ENCODE measurements at regions of chr9 and their contacts with region 1.

Region 1: GRCh38 chr9:114505187-114506081 is at the start of gene WHRN:
- DNase-seq: peak; percentile 80 to 94 (median 89)
- ATAC-seq: peak; percentile 95
- H3K4me3 ChIP-seq: peak within 1 kb of the TSS; percentile 59
- H3K4me3 Mint-ChIP-seq: peak within 1 kb of the TSS; percentile 83 to 90 (median 88)
- H3K27ac ChIP-seq: peak within 1 kb of the TSS; percentile 57
- H3K27ac Mint-ChIP-seq: peak within 1 kb of the TSS; percentile 55 to 94 (median 87)
- H3K4me1 ChIP-seq: peaks cover 14 to 29% of the 10 kb centered on the region in 2 donors
- H3K4me1 Mint-ChIP-seq: peaks cover 5 to 26% (median 22%) of the 10 kb centered on the region in 7 donors
- H3K27me3 ChIP-seq: no peaks in the 10 kb centered on the region
- H3K27me3 Mint-ChIP-seq: peaks cover 0 to 86% (median 33%) of the 10 kb centered on the region in 5 donors
- total RNA-seq, gene WHRN: 1.1 to 24.0 (median 3.0) TPM

Region 2: DNA sequence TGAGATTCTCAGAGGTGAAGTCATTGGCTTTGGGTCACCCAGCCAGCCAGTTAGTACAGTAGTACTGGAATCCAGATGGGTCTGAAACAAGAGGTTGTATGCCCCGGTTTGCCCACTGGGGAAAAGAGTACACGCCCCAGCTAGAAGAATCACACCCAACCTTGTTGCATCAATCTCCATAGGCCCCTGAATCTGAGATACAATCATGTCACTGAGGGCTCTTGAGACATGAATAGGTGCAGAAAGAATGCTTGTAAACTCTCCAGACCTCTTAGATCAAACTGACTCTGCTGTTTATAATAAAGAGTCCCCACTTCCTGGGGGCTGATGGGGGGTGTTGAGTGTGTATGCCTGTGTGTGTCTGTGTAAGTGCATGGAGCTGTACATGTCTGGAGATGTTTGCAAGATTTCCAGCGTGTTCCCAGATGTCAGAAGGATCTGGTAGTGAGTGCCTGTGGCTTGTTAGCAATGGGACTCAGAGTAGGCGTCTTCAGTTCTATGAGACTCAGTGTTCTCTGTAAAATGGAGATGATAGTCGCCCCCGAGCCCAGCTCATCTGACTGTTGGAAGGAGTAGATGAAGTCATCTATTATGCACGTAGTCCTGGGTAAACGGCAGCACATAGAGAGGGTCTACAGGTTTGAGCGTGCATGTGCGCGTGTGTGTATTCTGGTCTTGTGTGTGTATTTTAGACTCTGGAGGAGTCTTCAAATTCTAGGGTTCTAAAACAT is 301.9 kb before region 1 on chr9:
- CTCF ChIA-PET with region 1: no interaction called
- POLR2A ChIA-PET with region 1: no interaction called
- intact Hi-C with region 1: no loop called
- DNase-seq: no peak
- ATAC-seq: no peak
- H3K4me3 ChIP-seq: no peak overlapping the region
- H3K4me3 Mint-ChIP-seq: no peak overlapping the region
- H3K27ac ChIP-seq: no peak overlapping the region
- H3K27ac Mint-ChIP-seq: no peak overlapping the region
- H3K4me1 ChIP-seq: no peaks in the 10 kb centered on the region
- H3K4me1 Mint-ChIP-seq: peaks cover 0 to 3% (median 0%) of the 10 kb centered on the region in 7 donors
- H3K27me3 ChIP-seq: no peaks in the 10 kb centered on the region
- H3K27me3 Mint-ChIP-seq: no peaks in the 10 kb centered on the region

Region 3: GRCh38 chr9:114291064-114291474 is 214.4 kb before region 1 on chr9:
- CTCF ChIA-PET with region 1: no interaction called
- POLR2A ChIA-PET with region 1: no interaction called
- intact Hi-C with region 1: no loop called
- DNase-seq: peak; percentile 30 to 73 (median 57)
- ATAC-seq: peak; percentile 65
- H3K4me3 ChIP-seq: no peak overlapping the region
- H3K4me3 Mint-ChIP-seq: no peak overlapping the region
- H3K27ac ChIP-seq: no peak overlapping the region
- H3K27ac Mint-ChIP-seq: peak overlapping the region in 1 of 9 donors; percentile 20
- H3K4me1 ChIP-seq: no peaks in the 10 kb centered on the region
- H3K4me1 Mint-ChIP-seq: peaks cover 0 to 5% (median 0%) of the 10 kb centered on the region in 7 donors
- H3K27me3 ChIP-seq: no peaks in the 10 kb centered on the region
- H3K27me3 Mint-ChIP-seq: peaks cover 2 to 7% (median 5%) of the 10 kb centered on the region in 5 donors

Region 4: DNA sequence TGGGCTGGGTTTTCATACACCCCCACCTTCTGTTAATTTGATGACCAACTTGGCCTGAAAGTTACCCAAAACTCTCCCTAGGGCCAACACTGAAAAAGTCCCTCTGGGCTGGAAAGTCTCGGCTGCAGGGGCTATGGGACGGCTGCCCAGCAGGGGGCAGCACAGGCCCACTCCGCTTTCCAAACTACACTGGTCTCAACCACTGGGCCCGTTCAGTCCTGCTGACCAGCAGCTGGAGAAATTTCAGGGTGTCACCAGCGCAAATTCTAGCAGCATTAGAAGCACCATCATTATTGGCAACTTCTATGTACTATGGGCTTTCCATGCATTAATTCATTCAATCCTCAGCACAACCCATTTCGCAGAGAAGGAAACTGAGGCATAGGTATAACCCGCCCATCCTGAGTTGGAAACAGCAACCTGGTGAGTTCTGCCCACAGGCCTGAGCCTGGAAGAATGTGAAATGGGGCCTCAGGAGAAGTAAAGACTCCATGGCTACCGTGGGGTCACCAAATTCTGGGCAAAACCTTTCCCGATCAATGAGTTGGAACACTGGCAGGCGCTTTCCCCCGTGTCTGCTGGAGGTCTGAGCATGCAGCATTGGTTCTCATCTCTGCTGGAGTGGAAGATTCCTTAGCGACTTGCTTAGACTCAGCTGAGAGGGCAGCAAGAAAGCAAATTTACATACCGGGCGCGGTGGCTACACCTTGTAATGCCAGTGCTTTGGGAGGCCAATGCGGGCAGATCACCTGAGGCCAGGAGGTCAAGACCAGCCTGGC is 166.1 kb before region 1 on chr9:
- CTCF ChIA-PET with region 1: interaction called, 3 read pairs
- POLR2A ChIA-PET with region 1: no interaction called
- intact Hi-C with region 1: loop called (anchors 1 to 5 kb)
- DNase-seq: peak in 8 of 9 donors; percentile 19 to 64 (median 50)
- ATAC-seq: peak; percentile 83
- H3K4me3 ChIP-seq: no peak overlapping the region
- H3K4me3 Mint-ChIP-seq: no peak overlapping the region
- H3K27ac ChIP-seq: peak overlapping the region; percentile 14
- H3K27ac Mint-ChIP-seq: peak overlapping the region in 6 of 9 donors; percentile 15 to 76 (median 67)
- H3K4me1 ChIP-seq: no peaks in the 10 kb centered on the region
- H3K4me1 Mint-ChIP-seq: peaks cover 8 to 37% (median 17%) of the 10 kb centered on the region in 7 donors
- H3K27me3 ChIP-seq: no peaks in the 10 kb centered on the region
- H3K27me3 Mint-ChIP-seq: no peaks in the 10 kb centered on the region

Region 5: GRCh38 chr9:114405294-114406034 is 100.0 kb before region 1 on chr9:
- CTCF ChIA-PET with region 1: interaction called, 15 read pairs
- POLR2A ChIA-PET with region 1: no interaction called
- intact Hi-C with region 1: loop called (anchors 1 kb)
- DNase-seq: peak; percentile 56 to 84 (median 80)
- ATAC-seq: peak; percentile 97
- H3K4me3 ChIP-seq: no peak overlapping the region
- H3K4me3 Mint-ChIP-seq: no peak overlapping the region
- H3K27ac ChIP-seq: no peak overlapping the region
- H3K27ac Mint-ChIP-seq: peak overlapping the region in 6 of 9 donors; percentile 16 to 91 (median 60)
- H3K4me1 ChIP-seq: peaks cover 4 to 11% of the 10 kb centered on the region in 2 donors
- H3K4me1 Mint-ChIP-seq: peaks cover 6 to 10% (median 6%) of the 10 kb centered on the region in 7 donors
- H3K27me3 ChIP-seq: no peaks in the 10 kb centered on the region
- H3K27me3 Mint-ChIP-seq: no peaks in the 10 kb centered on the region

Region 6: GRCh38 chr9:114452219-114453165 is 52.9 kb before region 1 on chr9:
- CTCF ChIA-PET with region 1: no interaction called
- POLR2A ChIA-PET with region 1: interaction called, 3 read pairs
- intact Hi-C with region 1: loop called in 1 of 2 experiments (anchors 5 kb)
- DNase-seq: peak in 7 of 9 donors; percentile 33 to 55 (median 45)
- ATAC-seq: no peak
- H3K4me3 ChIP-seq: peak overlapping the region; percentile 23
- H3K4me3 Mint-ChIP-seq: peak overlapping the region; percentile 18 to 66 (median 48)
- H3K27ac ChIP-seq: peak overlapping the region; percentile 42
- H3K27ac Mint-ChIP-seq: peak overlapping the region; percentile 63 to 95 (median 84)
- H3K4me1 ChIP-seq: peaks cover 7 to 22% of the 10 kb centered on the region in 2 donors
- H3K4me1 Mint-ChIP-seq: peaks cover 15 to 34% (median 24%) of the 10 kb centered on the region in 7 donors
- H3K27me3 ChIP-seq: no peaks in the 10 kb centered on the region
- H3K27me3 Mint-ChIP-seq: peaks cover 0 to 30% (median 0%) of the 10 kb centered on the region in 5 donors

Region 7: DNA sequence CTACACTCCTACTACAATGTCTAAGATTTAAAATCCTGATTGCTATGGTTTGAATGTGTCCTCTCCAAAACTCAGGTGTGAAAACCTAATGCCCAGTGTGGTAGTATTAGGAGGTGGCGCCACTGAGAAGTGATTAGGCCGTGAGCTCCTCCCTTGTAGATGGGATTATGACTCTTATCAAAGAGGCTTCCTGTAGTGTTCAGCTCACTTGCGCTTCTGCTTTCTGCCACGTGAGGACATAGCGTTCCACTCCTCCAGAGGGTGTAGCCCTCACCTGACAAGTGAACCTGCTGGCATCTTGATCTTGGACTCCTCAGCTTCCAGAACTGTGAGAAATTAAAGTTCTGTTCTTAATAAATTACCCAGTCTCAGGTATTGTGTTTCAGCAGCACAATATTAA is 32.8 kb after region 1 on chr9:
- CTCF ChIA-PET with region 1: no interaction called
- POLR2A ChIA-PET with region 1: no interaction called
- intact Hi-C with region 1: loop called in 1 of 2 experiments (anchors 2 kb)
- DNase-seq: peak in 7 of 9 donors; percentile 11 to 43 (median 23)
- ATAC-seq: peak; percentile 92
- H3K4me3 ChIP-seq: no peak overlapping the region
- H3K4me3 Mint-ChIP-seq: no peak overlapping the region
- H3K27ac ChIP-seq: no peak overlapping the region
- H3K27ac Mint-ChIP-seq: peak overlapping the region in 4 of 9 donors; percentile 13 to 67 (median 42)
- H3K4me1 ChIP-seq: no peaks in the 10 kb centered on the region
- H3K4me1 Mint-ChIP-seq: peaks cover 0 to 13% (median 7%) of the 10 kb centered on the region in 7 donors
- H3K27me3 ChIP-seq: no peaks in the 10 kb centered on the region
- H3K27me3 Mint-ChIP-seq: peaks cover 0 to 38% (median 0%) of the 10 kb centered on the region in 5 donors